ENCODE measurements at regions of chr3 and their contacts with region 1.

Region 1: GRCh38 chr3:31132132-31132769 is 237.8 kb upstream of the GADL1 start:
- DNase-seq: peak; percentile 54
- ATAC-seq: peak; percentile 76
- H3K4me3 ChIP-seq: no peak overlapping the region
- H3K27ac ChIP-seq: no peak overlapping the region
- H3K4me1 ChIP-seq: no peaks in the 10 kb centered on the region
- H3K27me3 ChIP-seq: no peaks in the 10 kb centered on the region
- CTCF ChIP-seq: peak; percentile 46 to 82 (median 62); a peak in 5 of 6 replicates
- POLR2A ChIP-seq: no peak
- RAD21 ChIP-seq: peak; percentile 94

Region 2: DNA sequence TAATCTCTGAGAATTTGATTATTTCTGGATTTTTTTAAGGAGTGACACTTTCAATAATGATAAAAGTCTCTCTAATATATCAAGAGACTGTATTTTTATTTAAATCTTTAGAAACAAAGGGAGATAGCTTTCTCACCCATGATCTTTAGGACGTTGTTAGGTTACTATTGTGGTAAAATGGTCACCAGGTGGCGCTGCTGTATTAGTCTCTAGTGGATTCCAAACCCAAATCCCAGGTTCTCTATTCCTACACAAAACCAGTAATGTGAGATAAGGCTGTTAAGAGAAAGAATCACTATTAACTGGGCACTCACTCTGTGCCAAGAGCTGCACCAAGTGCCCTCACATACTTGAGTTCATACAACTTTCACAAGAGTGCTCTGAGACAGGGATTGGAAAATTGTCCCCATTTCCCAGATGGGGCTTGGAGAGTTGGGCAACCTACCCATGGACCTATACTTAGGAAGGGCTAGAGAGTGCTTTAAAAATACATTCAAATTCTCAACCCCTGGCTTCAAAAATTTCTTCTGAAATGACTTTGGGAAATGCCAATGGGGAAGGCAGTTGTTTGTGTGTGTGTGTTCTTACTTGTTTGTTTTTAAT is 1119.2 kb before region 1 on chr3:
- CTCF ChIA-PET with region 1: interaction called, 3 read pairs
- POLR2A ChIA-PET with region 1: no interaction called
- RAD21 ChIA-PET with region 1: no interaction called
- intact Hi-C with region 1: loop called (anchors 5 kb)
- DNase-seq: peak; percentile 64
- ATAC-seq: peak; percentile 93
- H3K4me3 ChIP-seq: no peak overlapping the region
- H3K27ac ChIP-seq: no peak overlapping the region
- H3K4me1 ChIP-seq: no peaks in the 10 kb centered on the region
- H3K27me3 ChIP-seq: no peaks in the 10 kb centered on the region
- CTCF ChIP-seq: peak; percentile 38 to 83 (median 62); a peak in 5 of 6 replicates
- POLR2A ChIP-seq: no peak
- RAD21 ChIP-seq: peak; percentile 85

Region 3: GRCh38 chr3:30768703-30769685 is 363.3 kb before region 1 on chr3:
- CTCF ChIA-PET with region 1: interaction called, 23 read pairs
- POLR2A ChIA-PET with region 1: no interaction called
- RAD21 ChIA-PET with region 1: interaction called in 1 of 2 experiments, 4 read pairs
- intact Hi-C with region 1: loop called (anchors 1 kb)
- DNase-seq: peak; percentile 51
- ATAC-seq: peak; percentile 57
- H3K4me3 ChIP-seq: no peak overlapping the region
- H3K27ac ChIP-seq: no peak overlapping the region
- H3K4me1 ChIP-seq: peaks cover 6 to 13% of the 10 kb centered on the region in 2 experiments; a peak in 3 of 4 replicates
- H3K27me3 ChIP-seq: no peaks in the 10 kb centered on the region
- CTCF ChIP-seq: peak; percentile 57 to 90 (median 77); a peak in 5 of 6 replicates
- POLR2A ChIP-seq: no peak
- RAD21 ChIP-seq: peak; percentile 82

Region 4: DNA sequence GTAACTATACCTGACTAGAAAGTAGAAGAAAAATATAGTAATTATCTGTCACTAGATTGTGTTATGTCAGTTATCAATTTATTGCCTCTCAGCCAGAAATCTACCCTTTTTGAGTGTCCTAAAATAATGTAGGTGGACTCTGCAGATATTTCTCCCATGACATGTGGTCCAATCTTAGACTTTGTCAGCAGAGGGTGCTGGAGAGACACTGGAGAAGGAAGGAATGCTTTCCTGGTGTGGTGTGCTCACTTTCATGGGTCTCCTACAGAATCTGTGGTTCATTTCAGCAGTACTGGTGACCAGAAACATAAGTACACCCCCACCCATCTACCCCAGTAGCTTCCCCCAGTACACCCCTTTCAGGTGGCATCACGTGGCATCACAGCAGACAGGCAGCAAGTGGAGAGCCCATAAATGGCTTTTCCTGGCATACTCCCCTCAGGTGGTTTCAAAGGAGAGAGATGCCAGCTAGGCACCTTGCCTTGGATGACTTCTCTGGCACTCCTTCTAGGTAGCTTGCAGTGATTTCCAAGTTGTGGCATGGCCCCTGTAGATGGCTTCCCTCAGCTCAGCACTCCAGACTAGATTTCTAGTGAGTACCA is 352.5 kb before region 1 on chr3:
- CTCF ChIA-PET with region 1: interaction called, 3 read pairs
- POLR2A ChIA-PET with region 1: no interaction called
- RAD21 ChIA-PET with region 1: interaction called in 1 of 2 experiments, 3 read pairs
- intact Hi-C with region 1: loop called (anchors 1 kb)
- DNase-seq: peak; percentile 16
- ATAC-seq: peak; percentile 91
- H3K4me3 ChIP-seq: no peak overlapping the region
- H3K27ac ChIP-seq: no peak overlapping the region
- H3K4me1 ChIP-seq: no peaks in the 10 kb centered on the region
- H3K27me3 ChIP-seq: no peaks in the 10 kb centered on the region
- CTCF ChIP-seq: peak; percentile 38 to 65 (median 57); a peak in 5 of 6 replicates
- POLR2A ChIP-seq: no peak
- RAD21 ChIP-seq: peak; percentile 66

Region 5: DNA sequence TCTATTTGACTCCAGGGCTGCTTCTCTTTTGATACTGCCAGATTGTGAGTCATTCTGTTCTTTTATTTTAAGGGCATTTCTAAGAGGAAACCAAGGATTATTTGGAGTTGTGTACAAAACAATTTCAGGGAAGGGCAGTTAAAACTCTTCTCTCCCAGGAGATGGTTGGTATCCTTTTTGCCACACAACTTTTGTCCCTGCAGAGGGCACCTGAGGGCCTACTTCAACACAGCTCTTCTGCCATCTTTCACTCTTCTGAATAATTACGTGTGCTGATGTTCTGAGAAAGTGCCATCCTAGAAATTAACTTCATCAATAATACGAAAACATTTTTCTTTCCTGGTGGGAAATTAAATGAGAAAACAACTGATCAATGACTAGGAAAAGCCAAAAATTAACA is 162.1 kb before region 1 on chr3:
- CTCF ChIA-PET with region 1: interaction called, 4 read pairs
- POLR2A ChIA-PET with region 1: no interaction called
- RAD21 ChIA-PET with region 1: no interaction called
- intact Hi-C with region 1: loop called (anchors 5 kb)
- DNase-seq: no peak
- ATAC-seq: peak; percentile 63; the same call in 1 of the 2 replicates
- H3K4me3 ChIP-seq: no peak overlapping the region
- H3K27ac ChIP-seq: no peak overlapping the region
- H3K4me1 ChIP-seq: no peaks in the 10 kb centered on the region
- H3K27me3 ChIP-seq: no peaks in the 10 kb centered on the region
- CTCF ChIP-seq: peak; percentile 35; a peak in 3 of 6 replicates
- POLR2A ChIP-seq: no peak
- RAD21 ChIP-seq: peak; percentile 60